GM12878 (cell line): ENCODE measurements at regions of chr1 and their contacts with region 1.

Region 1: DNA sequence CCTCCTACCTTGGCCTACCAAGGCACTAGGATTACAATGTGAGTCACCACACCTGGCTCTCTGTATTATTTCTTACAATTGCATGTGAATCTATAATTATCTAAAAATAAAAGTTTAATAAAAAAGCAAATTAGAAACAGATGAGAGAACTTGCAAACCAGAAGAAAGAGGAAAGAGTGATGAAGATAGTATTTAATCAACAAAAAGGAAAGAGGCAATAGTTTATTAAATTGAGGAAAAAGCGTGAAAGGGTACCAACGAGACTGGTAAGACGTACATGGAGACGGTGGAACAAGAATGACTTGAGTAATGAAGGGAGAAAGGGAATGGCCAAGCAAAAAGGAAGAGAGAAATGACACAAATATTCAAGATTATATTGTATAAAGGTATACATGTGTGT is 12.4 kb downstream of the BCAS2 start:
- DNase-seq: no peak
- ATAC-seq: no peak
- H3K4me3 ChIP-seq: no peak overlapping the region
- H3K27ac ChIP-seq: no peak overlapping the region
- H3K4me1 ChIP-seq: no peaks in the 10 kb centered on the region
- H3K27me3 ChIP-seq: no peaks in the 10 kb centered on the region
- CTCF ChIP-seq: no peak
- EP300 ChIP-seq: no peak
- POLR2A ChIP-seq: no peak
- RAD21 ChIP-seq: no peak

Region 2: DNA sequence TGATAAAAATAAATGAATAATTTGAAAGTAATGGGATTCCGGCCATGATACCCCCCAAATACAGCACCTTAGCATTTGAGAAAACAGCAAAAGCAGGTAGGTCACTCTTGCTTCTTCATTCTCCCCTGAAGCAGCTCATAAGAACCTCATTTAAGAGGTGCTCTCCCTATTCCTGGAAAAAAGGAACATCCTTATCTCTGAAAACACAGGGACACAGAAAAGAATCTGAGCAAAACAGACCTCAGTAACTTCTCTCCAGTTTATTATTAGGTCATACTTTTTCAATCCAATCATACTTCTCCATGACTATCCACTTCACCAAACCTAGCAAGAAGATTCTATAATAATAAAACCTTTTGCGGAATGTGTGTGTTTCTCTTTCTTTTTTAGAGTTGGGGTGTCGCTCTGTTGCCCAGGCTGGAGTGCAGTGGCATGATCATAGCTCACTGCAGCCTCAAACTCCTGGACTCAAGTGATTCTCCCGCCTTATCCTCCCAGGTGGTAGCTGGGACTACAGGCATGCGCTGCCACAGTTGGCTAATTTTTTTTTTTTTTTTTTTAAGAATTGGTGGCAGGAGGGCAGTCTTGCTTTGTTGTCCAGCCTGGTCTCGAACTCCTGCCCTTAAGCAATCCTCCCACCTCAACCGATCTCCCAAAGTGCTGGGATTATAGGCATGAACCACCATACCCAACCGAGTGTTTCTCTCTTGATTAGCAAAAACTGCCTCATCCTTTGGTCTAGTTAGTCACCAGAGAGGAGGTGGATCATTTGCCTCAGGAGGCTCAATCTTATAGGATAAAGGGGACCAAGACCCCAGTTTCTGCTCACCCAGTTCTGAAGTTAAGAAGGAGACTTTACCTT is 47.4 kb before region 1 on chr1:
- CTCF ChIA-PET with region 1: no interaction called
- POLR2A ChIA-PET with region 1: interaction called, 10 read pairs
- RAD21 ChIA-PET with region 1: no interaction called
- SMC1A ChIA-PET with region 1: no interaction called
- in situ Hi-C with region 1: no loop called
- intact Hi-C with region 1: no loop called
- DNase-seq: no peak
- ATAC-seq: no peak
- H3K4me3 ChIP-seq: no peak overlapping the region
- H3K27ac ChIP-seq: no peak overlapping the region
- H3K4me1 ChIP-seq: no peaks in the 10 kb centered on the region
- H3K27me3 ChIP-seq: no peaks in the 10 kb centered on the region
- CTCF ChIP-seq: no peak
- EP300 ChIP-seq: no peak
- POLR2A ChIP-seq: no peak
- RAD21 ChIP-seq: no peak